H1 (cell line): ENCODE measurements at regions of chr10 and their contacts with region 1.

Region 1: GRCh38 chr10:13707156-13707881 is 120.6 kb downstream of the PRPF18 start:
- DNase-seq: peak; percentile 62 to 73
- H3K4me3 ChIP-seq: peak overlapping the region; percentile 16 to 62 (median 44)
- H3K27ac ChIP-seq: peak overlapping the region; percentile 34; the same call in 1 of the 2 replicates
- H3K4me1 ChIP-seq: peaks cover 15 to 37% (median 22%) of the 10 kb centered on the region in 4 experiments
- H3K27me3 ChIP-seq: no peaks in the 10 kb centered on the region
- CTCF ChIP-seq: peak in 1 of 3 experiments; percentile 0; a peak in 1 of 4 replicates
- EP300 ChIP-seq: no peak
- POLR2A ChIP-seq: peak in 1 of 2 experiments; percentile 43; a peak in 1 of 3 replicates
- RAD21 ChIP-seq: no peak

Region 2: GRCh38 chr10:13717931-13718772 is 10.8 kb after region 1 on chr10:
- CTCF ChIA-PET with region 1: interaction called, 12 read pairs
- POLR2A ChIA-PET with region 1: interaction called, 10 read pairs
- DNase-seq: no peak
- H3K4me3 ChIP-seq: no peak overlapping the region
- H3K27ac ChIP-seq: no peak overlapping the region
- H3K4me1 ChIP-seq: peaks cover 0 to 3% (median under 1%) of the 10 kb centered on the region in 4 experiments; a peak in 2 of 7 replicates
- H3K27me3 ChIP-seq: no peaks in the 10 kb centered on the region
- CTCF ChIP-seq: no peak
- EP300 ChIP-seq: no peak
- POLR2A ChIP-seq: no peak
- RAD21 ChIP-seq: no peak

Region 3: DNA sequence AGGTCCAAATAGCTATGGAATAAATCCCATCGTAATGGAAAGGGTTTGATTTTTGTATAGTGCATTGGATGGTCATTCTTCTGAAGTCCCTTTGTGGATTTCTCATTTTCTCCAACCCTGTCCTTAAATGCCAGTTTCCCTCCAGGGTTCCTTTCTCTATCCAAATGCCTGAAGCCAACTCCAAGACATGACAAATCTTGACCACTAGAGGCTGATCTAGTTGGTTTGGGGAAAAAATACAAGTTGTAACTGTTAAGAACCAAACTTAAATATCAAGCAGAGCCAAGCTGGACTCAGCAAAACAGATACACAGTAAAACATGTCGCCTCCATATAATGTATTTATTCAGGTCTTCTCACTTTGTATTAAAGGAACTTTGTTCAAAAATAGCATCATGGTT is 594.7 kb after region 1 on chr10:
- CTCF ChIA-PET with region 1: no interaction called
- POLR2A ChIA-PET with region 1: no interaction called
- DNase-seq: no peak
- H3K4me3 ChIP-seq: no peak overlapping the region
- H3K27ac ChIP-seq: no peak overlapping the region
- H3K4me1 ChIP-seq: peaks cover 0 to 2% (median 0%) of the 10 kb centered on the region in 4 experiments; a peak in 1 of 7 replicates
- H3K27me3 ChIP-seq: peaks cover 0 to 1% (median 0%) of the 10 kb centered on the region in 4 experiments; a peak in 1 of 7 replicates
- CTCF ChIP-seq: peak in 2 of 3 experiments; percentile 52 to 71; a peak in 3 of 4 replicates
- EP300 ChIP-seq: no peak
- POLR2A ChIP-seq: no peak
- RAD21 ChIP-seq: peak; percentile 52 to 63